Activated CD4-positive, alpha-beta memory T cell treated with anti-CD3 and anti-CD28 coated beads for 36 hours (primary cell): ENCODE measurements at regions of chr12 and their contacts with region 1.

Region 1: DNA sequence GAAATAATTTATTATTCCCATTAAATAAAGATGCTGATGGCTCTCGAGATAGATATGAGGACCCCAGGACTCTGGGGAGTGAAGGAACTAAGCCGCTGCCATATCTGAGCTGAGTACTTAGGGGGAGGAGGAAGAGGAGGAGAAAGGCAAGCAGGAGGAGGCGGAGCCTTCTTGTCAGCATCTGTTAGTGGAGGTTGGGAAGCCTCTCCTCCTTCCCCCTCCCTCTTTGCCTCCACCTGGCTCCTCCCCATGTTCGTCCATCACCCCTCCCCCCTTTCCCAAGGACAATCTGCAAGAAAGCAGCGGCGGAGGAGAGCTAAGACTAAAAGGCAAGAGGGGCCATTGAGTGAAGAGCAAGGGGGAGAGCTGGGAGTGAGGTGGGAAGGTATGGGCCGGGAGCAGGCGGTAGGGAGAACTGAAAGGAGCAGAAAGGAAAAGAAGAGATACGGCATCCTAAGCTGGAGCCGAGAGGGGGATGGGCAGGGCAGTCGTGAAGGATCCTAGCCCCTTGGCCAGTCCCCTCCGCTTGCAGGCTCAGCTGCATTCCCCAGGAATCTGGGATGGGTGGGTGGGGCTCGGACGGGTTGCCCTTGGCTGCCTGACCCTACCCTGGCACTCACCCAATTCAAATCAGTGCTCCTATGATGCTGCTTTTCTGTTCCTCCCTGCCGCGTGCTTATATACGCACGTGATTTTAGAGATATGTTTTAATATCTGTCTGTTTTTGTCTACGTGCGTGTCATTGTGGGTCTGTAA is at the start of gene PFKM:
- DNase-seq: peak; percentile 85
- H3K4me3 Mint-ChIP-seq: peak within 1 kb of the TSS; percentile 99
- H3K27ac Mint-ChIP-seq: peak within 1 kb of the TSS; percentile 76
- H3K4me1 Mint-ChIP-seq: peaks cover 19% of the 10 kb centered on the region
- H3K27me3 Mint-ChIP-seq: peaks cover 3% of the 10 kb centered on the region
- total RNA-seq, gene PFKM: 55.6 to 56.1 TPM

Region 2: GRCh38 chr12:48061948-48062719 is 57.1 kb before region 1 on chr12:
- CTCF ChIA-PET with region 1: no interaction called
- POLR2A ChIA-PET with region 1: no interaction called
- intact Hi-C with region 1: no loop called
- DNase-seq: no peak
- H3K4me3 Mint-ChIP-seq: no peak overlapping the region
- H3K27ac Mint-ChIP-seq: no peak overlapping the region
- H3K4me1 Mint-ChIP-seq: peaks cover 1% of the 10 kb centered on the region
- H3K27me3 Mint-ChIP-seq: no peaks in the 10 kb centered on the region

Region 3: GRCh38 chr12:48157018-48157888 is 38.0 kb after region 1 on chr12 and contains the start of gene ASB8:
- CTCF ChIA-PET with region 1: no interaction called
- POLR2A ChIA-PET with region 1: no interaction called
- intact Hi-C with region 1: loop called (anchors 1 kb)
- DNase-seq: peak; percentile 100
- H3K4me3 Mint-ChIP-seq: peak within 1 kb of the TSS; percentile 94
- H3K27ac Mint-ChIP-seq: peak within 1 kb of the TSS; percentile 96
- H3K4me1 Mint-ChIP-seq: peaks cover 37% of the 10 kb centered on the region
- H3K27me3 Mint-ChIP-seq: no peaks in the 10 kb centered on the region
- total RNA-seq, gene ASB8: 31.4 to 33.6 TPM

Region 4: GRCh38 chr12:48216785-48217184 is 97.5 kb after region 1 on chr12:
- CTCF ChIA-PET with region 1: no interaction called
- POLR2A ChIA-PET with region 1: no interaction called
- intact Hi-C with region 1: no loop called
- DNase-seq: no peak
- H3K4me3 Mint-ChIP-seq: no peak overlapping the region
- H3K27ac Mint-ChIP-seq: no peak overlapping the region
- H3K4me1 Mint-ChIP-seq: no peaks in the 10 kb centered on the region
- H3K27me3 Mint-ChIP-seq: peaks cover 4% of the 10 kb centered on the region

Region 5: GRCh38 chr12:48296586-48297282 is 177.5 kb after region 1 on chr12:
- CTCF ChIA-PET with region 1: no interaction called
- POLR2A ChIA-PET with region 1: no interaction called
- intact Hi-C with region 1: no loop called
- DNase-seq: peak; percentile 64
- H3K4me3 Mint-ChIP-seq: peak overlapping the region; percentile 57
- H3K27ac Mint-ChIP-seq: no peak overlapping the region
- H3K4me1 Mint-ChIP-seq: peaks cover 10% of the 10 kb centered on the region
- H3K27me3 Mint-ChIP-seq: peaks cover 4% of the 10 kb centered on the region